ENCODE measurements at regions of chr17 and their contacts with region 1.

Region 1: DNA sequence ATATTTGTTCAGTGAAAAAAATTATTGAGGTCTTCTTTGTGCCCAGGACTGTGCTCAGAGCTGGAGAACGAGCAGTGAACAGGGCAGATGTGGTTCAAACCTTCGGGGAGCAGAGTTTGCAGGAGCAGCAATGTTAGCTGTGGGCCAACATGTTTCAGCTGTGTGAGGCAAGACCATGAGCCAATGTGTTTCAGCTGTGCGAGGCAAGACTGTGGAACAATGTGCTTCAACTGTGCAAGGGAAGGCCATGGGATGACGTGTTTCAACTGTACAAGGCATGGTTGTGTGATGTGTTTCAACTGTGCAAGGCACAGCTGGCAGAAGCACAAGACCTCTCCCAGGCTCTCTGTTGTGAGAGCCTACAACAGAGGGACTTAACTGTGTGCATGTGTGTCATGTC is 35.2 kb upstream of the SDK2 start:
- DNase-seq: no peak

Region 2: GRCh38 chr17:73910206-73910605 is 230.7 kb after region 1 on chr17:
- intact Hi-C with region 1: no loop called
- DNase-seq: no peak

Region 3: DNA sequence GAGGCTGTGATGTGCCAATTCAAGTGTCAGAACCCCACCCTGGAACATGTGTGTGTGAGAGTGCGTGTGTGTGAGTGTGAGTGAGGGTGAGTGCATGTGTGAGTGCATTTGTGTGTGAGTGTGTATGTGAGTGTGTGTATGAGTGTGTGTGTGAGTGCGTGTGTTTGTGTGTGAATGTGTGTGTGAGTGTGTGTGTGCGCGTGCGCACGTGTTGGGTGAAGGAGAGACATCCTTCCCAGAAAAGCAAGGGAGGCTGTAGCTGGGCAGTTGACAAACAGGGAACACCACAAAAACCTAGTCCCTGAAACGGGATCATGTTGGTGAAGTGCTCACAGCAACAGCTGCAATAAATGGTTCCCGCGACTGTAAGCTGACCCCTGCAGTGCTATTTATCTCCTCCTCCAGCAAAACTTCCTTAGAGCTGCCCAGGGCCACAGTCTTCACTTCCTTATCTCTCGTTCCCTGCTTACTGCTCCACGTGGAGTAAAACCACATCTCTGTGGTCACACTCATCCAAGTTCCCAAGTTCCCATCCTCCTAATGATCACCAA is 483.9 kb after region 1 on chr17:
- intact Hi-C with region 1: loop called in 1 of 2 experiments (anchors 10 kb)
- DNase-seq: no peak